ENCODE measurements at regions of chr7 and their contacts with region 1.

Region 1: DNA sequence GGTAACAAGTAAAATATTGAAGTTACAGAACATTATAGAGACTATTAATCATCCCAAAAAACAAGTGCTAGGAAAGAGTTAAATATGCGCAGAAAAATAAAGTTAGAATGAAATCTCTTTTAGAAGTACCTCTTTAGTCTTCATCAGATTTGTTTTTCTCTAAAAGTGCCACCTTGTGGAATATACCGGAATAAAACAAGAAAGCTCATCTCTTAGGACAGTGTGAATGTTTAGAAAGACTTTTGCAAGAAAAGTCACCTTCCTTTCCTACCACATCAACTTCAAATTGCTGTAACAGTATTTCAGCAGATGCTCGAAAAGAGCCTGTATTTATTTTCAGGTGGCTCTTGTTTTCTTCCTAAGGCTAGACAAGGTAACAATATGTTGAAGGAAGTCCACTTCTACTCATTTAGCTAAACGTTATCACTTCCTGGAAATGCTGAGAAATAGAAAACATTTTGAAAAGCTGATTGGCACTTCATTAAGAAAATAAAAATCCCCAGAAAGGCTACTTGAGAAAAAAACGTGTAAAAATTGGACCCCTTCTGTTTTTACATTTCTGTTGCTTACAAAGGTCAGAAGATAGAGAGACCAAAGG is 19.8 kb upstream of the FAM133B start:
- DNase-seq: no peak
- ATAC-seq: peak; percentile 67
- H3K4me3 ChIP-seq: no peak overlapping the region
- H3K27ac ChIP-seq: no peak overlapping the region
- H3K4me1 ChIP-seq: peaks cover 0 to 8% of the 10 kb centered on the region in 2 experiments; a peak in 2 of 4 replicates
- H3K27me3 ChIP-seq: no peaks in the 10 kb centered on the region
- CTCF ChIP-seq: peak; percentile 34 to 48 (median 38); a peak in 5 of 6 replicates
- POLR2A ChIP-seq: no peak
- RAD21 ChIP-seq: peak; percentile 35

Region 2: DNA sequence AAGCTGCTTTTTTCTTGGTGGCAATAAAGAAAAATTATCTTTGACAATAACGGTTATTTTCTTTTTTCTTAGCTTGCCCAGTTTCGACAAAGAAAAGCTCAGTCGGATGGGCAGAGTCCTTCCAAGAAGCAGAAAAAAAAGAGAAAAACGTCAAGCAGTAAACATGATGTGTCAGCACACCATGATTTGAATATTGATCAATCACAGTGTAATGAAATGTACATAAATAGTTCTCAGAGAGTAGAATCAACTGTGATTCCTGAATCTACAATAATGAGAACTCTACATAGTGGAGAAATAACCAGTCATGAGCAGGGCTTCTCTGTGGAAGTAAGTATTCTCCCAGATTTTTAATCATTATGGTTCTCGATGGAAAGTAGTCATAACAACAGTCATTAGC is 636.4 kb before region 1 on chr7:
- CTCF ChIA-PET with region 1: no interaction called
- POLR2A ChIA-PET with region 1: no interaction called
- RAD21 ChIA-PET with region 1: no interaction called
- intact Hi-C with region 1: no loop called
- DNase-seq: no peak
- ATAC-seq: no peak
- H3K4me3 ChIP-seq: no peak overlapping the region
- H3K27ac ChIP-seq: no peak overlapping the region
- H3K4me1 ChIP-seq: no peaks in the 10 kb centered on the region
- H3K27me3 ChIP-seq: no peaks in the 10 kb centered on the region
- CTCF ChIP-seq: no peak
- POLR2A ChIP-seq: no peak
- RAD21 ChIP-seq: no peak

Region 3: DNA sequence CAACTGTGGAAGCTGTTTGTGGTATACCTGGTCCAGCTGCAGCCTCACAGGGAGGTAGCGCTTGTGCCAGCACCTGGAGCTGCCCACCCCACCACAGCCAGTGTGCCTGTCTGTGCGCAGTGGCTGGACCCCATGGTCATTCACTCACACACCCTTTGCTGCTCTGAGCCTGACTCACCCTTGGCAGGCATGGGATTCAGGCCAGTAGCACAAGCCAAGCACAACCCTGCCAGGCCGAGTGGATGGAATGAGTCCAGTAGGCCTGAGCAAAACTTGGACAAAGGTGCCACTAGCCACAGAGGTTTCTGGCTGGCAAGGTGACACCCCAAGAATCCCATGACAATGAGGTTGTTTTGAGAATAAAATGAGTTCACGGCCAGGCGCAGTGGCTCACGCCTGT is 62.4 kb before region 1 on chr7:
- CTCF ChIA-PET with region 1: no interaction called
- POLR2A ChIA-PET with region 1: no interaction called
- RAD21 ChIA-PET with region 1: no interaction called
- intact Hi-C with region 1: no loop called
- DNase-seq: no peak
- ATAC-seq: no peak
- H3K4me3 ChIP-seq: no peak overlapping the region
- H3K27ac ChIP-seq: no peak overlapping the region
- H3K4me1 ChIP-seq: no peaks in the 10 kb centered on the region
- H3K27me3 ChIP-seq: no peaks in the 10 kb centered on the region
- CTCF ChIP-seq: no peak
- POLR2A ChIP-seq: no peak
- RAD21 ChIP-seq: no peak

Region 4: DNA sequence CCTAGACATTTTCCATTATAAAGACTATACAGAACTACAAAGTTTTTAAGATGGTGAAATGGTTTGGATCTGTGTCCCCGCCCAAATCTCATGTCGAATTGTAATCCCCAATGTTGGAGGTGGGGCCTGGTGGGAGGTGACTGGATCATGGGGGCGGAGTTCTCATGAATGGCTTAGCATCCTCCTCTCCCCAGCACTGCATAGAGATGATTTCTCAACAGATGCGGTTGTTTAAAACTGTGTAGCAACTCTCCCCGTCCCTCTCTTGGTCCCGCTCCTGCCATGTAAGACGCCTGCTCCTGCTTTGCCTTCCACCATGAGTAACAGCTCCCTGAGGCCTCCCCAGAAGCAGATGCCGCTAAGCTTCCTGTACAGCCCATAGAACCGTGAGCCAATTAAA is 21.5 kb before region 1 on chr7:
- CTCF ChIA-PET with region 1: interaction called, 3 read pairs
- POLR2A ChIA-PET with region 1: interaction called, 11 read pairs
- RAD21 ChIA-PET with region 1: no interaction called
- intact Hi-C with region 1: no loop called
- DNase-seq: no peak
- ATAC-seq: no peak
- H3K4me3 ChIP-seq: peak overlapping the region; percentile 80 to 90
- H3K27ac ChIP-seq: no peak overlapping the region
- H3K4me1 ChIP-seq: peaks cover 3 to 19% of the 10 kb centered on the region in 2 experiments; a peak in 3 of 4 replicates
- H3K27me3 ChIP-seq: no peaks in the 10 kb centered on the region
- CTCF ChIP-seq: no peak
- POLR2A ChIP-seq: no peak
- RAD21 ChIP-seq: no peak

Region 5: DNA sequence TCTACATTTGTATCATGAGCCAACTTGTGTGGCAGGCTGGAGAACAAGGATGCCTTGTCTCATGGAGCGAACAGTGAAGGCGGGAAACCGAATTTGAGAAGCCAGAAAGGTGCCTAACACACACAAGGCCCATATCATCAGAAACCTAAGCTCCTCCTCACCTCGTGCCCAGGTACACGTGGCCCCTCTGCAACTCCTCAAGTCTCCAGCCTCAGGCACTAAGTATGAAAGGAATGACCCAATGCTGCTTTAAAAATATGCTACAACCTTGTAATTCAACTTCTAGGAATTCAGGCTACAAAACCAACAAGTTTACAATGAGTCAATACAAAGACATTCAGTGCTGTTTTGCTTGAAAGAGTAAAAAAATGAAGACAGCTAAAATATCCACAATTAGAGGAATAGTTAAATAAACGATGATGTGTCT is 130.7 kb after region 1 on chr7:
- CTCF ChIA-PET with region 1: no interaction called
- POLR2A ChIA-PET with region 1: no interaction called
- RAD21 ChIA-PET with region 1: no interaction called
- intact Hi-C with region 1: no loop called
- DNase-seq: no peak
- ATAC-seq: peak; percentile 69
- H3K4me3 ChIP-seq: no peak overlapping the region
- H3K27ac ChIP-seq: no peak overlapping the region; the same call in 1 of the 2 replicates
- H3K4me1 ChIP-seq: peaks cover 10 to 26% of the 10 kb centered on the region in 2 experiments
- H3K27me3 ChIP-seq: no peaks in the 10 kb centered on the region
- CTCF ChIP-seq: no peak
- POLR2A ChIP-seq: no peak
- RAD21 ChIP-seq: no peak

Measured in HCT116 (cell line).